AG04450 (cell line): ENCODE measurements at regions of chr17 and their contacts with region 1.

Region 1: DNA sequence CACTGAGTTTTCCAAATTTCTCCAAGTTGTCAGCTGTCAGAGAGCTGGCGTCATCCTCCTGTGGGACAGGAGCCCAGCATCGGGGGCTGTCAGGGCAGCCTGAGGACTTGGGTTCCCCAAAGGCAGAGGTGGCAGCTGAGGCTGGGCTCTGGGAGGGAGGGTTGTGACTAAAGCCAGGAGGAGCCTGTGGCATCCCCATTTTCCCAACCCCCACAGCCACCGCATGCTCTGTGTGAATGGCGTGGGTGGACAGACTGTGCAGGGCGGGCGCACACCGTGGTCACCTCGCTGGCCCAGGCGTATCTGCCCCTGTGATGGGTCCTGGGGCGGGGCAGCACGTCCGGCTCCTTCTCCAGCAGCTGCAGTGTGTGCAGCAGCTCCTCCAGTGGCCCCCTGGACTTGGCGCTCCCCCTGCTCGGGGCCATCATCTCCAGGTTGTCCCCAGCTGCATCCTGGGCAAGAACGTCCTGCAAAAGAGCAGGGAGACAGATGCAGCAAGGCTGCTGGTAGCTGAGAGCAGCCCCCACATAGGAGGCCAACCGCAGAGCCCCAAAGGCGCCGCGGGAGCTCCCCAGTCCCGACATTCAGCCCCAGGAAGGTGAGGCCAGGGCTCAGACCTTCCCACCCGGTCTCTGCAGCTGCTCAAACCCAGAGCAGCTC is 24.8 kb downstream of the CEP131 start:
- DNase-seq: no peak
- H3K4me3 ChIP-seq: no peak overlapping the region
- H3K27ac ChIP-seq: no peak overlapping the region
- H3K27me3 ChIP-seq: no peaks in the 10 kb centered on the region
- CTCF ChIP-seq: no peak

Region 2: DNA sequence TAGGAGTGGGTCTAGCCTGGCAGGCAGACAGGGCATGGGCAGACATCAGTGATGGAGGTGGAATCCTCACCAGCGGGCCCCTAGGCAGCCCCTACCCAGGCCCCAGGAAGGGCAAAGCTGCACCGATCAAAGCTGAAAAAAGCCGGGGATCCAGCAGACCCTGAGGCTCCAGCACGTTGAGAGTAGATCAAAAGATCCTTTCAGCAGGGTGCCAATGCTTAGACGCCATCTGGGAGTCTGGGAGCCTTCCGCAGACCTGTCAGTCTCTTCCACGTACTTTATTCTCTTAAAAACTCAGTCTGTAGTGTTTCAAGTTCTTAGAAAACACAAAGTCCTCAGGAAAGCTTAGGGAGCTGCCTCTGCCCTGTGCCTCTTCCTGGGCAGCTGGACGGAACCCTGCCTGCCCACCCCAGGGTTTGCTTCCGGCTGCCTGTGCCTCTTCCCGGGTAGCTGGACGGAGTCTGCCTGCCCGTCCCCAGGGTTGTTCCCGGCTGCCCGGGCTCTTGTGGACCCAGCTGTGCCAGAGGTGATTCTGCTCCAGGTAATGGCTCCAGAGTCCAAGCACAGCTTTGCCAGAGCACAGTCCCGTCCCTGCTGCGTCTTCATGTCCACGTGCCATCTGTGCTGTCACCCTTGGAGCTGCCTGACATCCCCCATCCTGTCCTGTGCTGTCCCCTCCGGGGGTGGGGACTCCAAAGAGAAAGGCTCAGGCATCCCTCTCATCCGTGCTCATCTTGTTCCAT is 83.4 kb before region 1 on chr17:
- CTCF ChIA-PET with region 1: no interaction called
- POLR2A ChIA-PET with region 1: interaction called, 10 read pairs
- DNase-seq: no peak
- H3K4me3 ChIP-seq: no peak overlapping the region
- H3K27ac ChIP-seq: no peak overlapping the region
- H3K27me3 ChIP-seq: no peaks in the 10 kb centered on the region
- CTCF ChIP-seq: no peak

Region 3: DNA sequence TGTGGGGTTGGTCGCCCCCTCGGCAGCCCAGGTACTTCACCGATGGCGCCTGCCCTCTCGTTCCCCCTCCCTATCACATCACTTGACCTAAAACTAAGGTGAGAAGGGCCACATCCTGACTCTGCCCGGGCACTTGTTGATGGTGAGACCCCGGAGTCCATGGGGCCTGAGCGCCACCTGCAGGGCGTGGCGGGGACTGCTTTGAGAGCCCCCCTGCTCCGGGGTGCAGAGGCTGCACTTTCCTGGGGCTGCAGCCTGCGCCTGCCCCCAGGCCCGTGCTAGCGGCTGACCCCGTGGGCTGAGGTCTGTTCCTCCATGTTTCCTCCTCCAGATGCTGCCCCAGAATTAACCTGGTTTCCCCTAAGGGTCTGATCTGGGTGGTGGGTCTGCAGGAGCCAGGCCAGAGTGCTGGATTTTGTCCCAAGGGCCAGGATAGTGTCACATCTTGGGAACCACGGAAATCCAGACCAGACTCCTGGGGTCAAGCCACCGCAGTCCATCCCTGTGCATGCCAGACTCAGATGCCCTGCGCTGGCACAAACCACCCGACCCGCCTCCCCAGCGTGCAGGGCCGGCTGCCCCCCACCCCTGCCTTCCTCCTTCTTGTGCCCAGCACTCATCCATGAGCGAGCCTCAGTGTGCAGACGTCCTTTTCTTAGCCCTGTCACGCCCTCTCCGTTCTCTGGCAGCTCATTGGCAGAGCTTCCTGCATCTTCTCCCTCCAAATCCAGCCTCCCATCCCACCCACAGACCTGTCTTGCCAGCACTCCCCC is 43.9 kb after region 1 on chr17:
- CTCF ChIA-PET with region 1: no interaction called
- POLR2A ChIA-PET with region 1: no interaction called
- DNase-seq: no peak
- H3K4me3 ChIP-seq: no peak overlapping the region
- H3K27ac ChIP-seq: no peak overlapping the region
- H3K27me3 ChIP-seq: no peaks in the 10 kb centered on the region
- CTCF ChIP-seq: peak; percentile 70

Region 4: GRCh38 chr17:81322271-81323082 is 124.5 kb after region 1 on chr17:
- CTCF ChIA-PET with region 1: no interaction called
- POLR2A ChIA-PET with region 1: no interaction called
- DNase-seq: no peak
- H3K4me3 ChIP-seq: no peak overlapping the region
- H3K27ac ChIP-seq: no peak overlapping the region
- H3K27me3 ChIP-seq: peaks cover 8% of the 10 kb centered on the region
- CTCF ChIP-seq: no peak